CD8-positive, alpha-beta T cell (primary cell): ENCODE measurements at regions of chr17 and their contacts with region 1.

Region 1: GRCh38 chr17:47776330-47777197 is 43.5 kb downstream of the TBX21 start:
- DNase-seq: peak in 6 of 9 experiments; percentile 24 to 73 (median 32)
- ATAC-seq: peak; percentile 96
- H3K4me3 ChIP-seq: no peak overlapping the region
- H3K4me3 Mint-ChIP-seq: no peak overlapping the region
- H3K27ac ChIP-seq: no peak overlapping the region
- H3K27ac Mint-ChIP-seq: no peak overlapping the region
- H3K4me1 ChIP-seq: no peaks in the 10 kb centered on the region
- H3K4me1 Mint-ChIP-seq: peaks cover 3% of the 10 kb centered on the region
- H3K27me3 ChIP-seq: peaks cover 8 to 11% of the 10 kb centered on the region in 2 experiments
- H3K27me3 Mint-ChIP-seq: peaks cover 41% of the 10 kb centered on the region
- CTCF ChIP-seq: peak; percentile 88

Region 2: GRCh38 chr17:47725446-47726111 is 51.0 kb before region 1 on chr17:
- CTCF ChIA-PET with region 1: no interaction called
- POLR2A ChIA-PET with region 1: no interaction called
- intact Hi-C with region 1: no loop called
- DNase-seq: no peak
- ATAC-seq: no peak
- H3K4me3 ChIP-seq: no peak overlapping the region
- H3K4me3 Mint-ChIP-seq: no peak overlapping the region
- H3K27ac ChIP-seq: peak overlapping the region in 1 of 2 experiments; percentile 37
- H3K27ac Mint-ChIP-seq: no peak overlapping the region
- H3K4me1 ChIP-seq: peaks cover 31% of the 10 kb centered on the region
- H3K4me1 Mint-ChIP-seq: peaks cover 31% of the 10 kb centered on the region
- H3K27me3 ChIP-seq: no peaks in the 10 kb centered on the region
- H3K27me3 Mint-ChIP-seq: peaks cover 8% of the 10 kb centered on the region
- CTCF ChIP-seq: no peak

Region 3: DNA sequence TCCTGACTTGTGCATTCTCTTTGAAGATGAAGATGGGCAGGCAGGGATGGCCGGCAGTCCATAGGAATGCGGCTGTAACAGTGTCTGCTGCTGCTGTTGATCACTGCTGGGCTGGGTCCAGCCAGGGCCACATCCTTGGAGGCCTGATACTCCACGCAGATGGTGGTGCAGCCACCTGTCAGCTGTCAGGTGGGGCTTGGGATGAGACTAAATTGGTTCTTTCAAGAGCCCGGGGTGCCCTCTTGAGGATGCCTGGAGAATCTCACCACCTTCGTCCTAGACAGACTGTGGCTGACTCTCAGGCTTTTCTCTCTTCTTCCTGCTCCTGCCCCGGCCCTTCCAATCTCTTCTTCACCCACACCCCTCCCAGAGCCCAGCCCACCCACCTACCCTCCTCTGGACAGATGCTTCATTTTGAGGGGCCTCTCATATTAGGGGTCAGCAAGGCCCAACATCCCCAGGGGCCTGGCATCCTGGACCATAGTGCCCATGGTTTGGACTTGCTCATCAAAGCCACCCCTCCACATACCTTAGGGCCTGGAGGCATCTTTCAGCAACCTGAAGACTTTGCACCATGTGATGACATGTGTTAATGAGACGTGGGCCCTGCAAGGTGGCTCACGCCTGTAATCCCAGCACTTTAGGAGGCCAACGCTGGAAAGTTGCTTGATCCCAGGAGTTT is 25.9 kb after region 1 on chr17:
- CTCF ChIA-PET with region 1: interaction called, 3 read pairs
- POLR2A ChIA-PET with region 1: interaction called, 5 read pairs
- intact Hi-C with region 1: loop called (anchors 1 kb)
- DNase-seq: peak; percentile 27 to 73 (median 60)
- ATAC-seq: peak; percentile 92
- H3K4me3 ChIP-seq: no peak overlapping the region
- H3K4me3 Mint-ChIP-seq: no peak overlapping the region
- H3K27ac ChIP-seq: no peak overlapping the region
- H3K27ac Mint-ChIP-seq: no peak overlapping the region
- H3K4me1 ChIP-seq: no peaks in the 10 kb centered on the region
- H3K4me1 Mint-ChIP-seq: no peaks in the 10 kb centered on the region
- H3K27me3 ChIP-seq: no peaks in the 10 kb centered on the region
- H3K27me3 Mint-ChIP-seq: peaks cover 3% of the 10 kb centered on the region
- CTCF ChIP-seq: peak; percentile 54

Region 4: GRCh38 chr17:47889734-47890529 is 113.4 kb after region 1 on chr17:
- CTCF ChIA-PET with region 1: interaction called, 3 read pairs
- POLR2A ChIA-PET with region 1: no interaction called
- intact Hi-C with region 1: loop called (anchors 1 kb)
- DNase-seq: peak; percentile 80 to 97 (median 90)
- ATAC-seq: peak; percentile 99
- H3K4me3 ChIP-seq: no peak overlapping the region
- H3K4me3 Mint-ChIP-seq: no peak overlapping the region
- H3K27ac ChIP-seq: no peak overlapping the region
- H3K27ac Mint-ChIP-seq: no peak overlapping the region
- H3K4me1 ChIP-seq: peaks cover 22% of the 10 kb centered on the region
- H3K4me1 Mint-ChIP-seq: peaks cover 29% of the 10 kb centered on the region
- H3K27me3 ChIP-seq: no peaks in the 10 kb centered on the region
- H3K27me3 Mint-ChIP-seq: no peaks in the 10 kb centered on the region
- CTCF ChIP-seq: peak; percentile 96